CD14-positive monocyte (primary cell): ENCODE measurements at regions of chr19 and their contacts with region 1.

Region 1: DNA sequence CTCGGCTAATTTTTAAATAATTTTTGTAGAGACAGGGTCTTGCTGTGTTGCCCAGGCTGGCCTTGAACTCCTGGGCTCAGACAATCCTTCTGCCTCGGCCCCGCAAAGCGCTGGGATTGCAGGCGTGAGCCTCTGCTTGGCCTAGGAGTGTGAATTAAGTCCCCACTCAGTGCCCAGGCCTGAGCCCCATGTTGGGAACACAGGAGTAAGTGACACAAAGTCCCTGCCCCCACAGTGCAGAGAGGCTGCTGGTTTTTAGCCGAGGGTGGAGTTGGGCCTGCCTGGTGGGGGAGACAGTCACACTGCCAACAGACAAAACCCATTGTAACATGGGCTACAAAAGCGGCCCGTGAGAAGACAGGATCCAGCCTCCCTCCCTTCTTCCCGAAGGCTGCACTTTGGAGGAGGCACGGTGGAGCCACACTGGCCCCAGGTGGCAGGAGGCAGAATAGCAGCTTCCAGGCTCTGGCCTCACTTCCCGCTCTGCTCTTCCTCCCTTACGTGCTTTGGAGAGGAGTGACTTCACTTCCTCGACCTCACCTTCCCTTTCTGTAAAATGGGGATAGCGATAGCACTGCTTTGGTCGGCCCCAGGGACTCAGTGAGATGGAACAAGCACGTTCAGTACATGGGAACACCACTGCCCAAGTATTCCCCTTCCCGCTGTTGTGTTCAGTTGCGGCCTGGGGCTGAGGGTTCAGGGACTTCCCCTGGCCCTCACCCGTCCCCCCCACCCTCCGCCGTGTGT is 15.2 kb upstream of the EHD2 start:
- DNase-seq: peak; percentile 61 to 66 (median 63)
- H3K4me3 ChIP-seq: no peak overlapping the region
- H3K4me3 Mint-ChIP-seq: no peak overlapping the region
- H3K27ac ChIP-seq: peak overlapping the region in 1 of 2 donors; percentile 14
- H3K27ac Mint-ChIP-seq: peak overlapping the region in 2 of 7 donors; percentile 64 to 78
- H3K4me1 ChIP-seq: peaks cover 0 to 3% of the 10 kb centered on the region in 2 donors
- H3K4me1 Mint-ChIP-seq: peaks cover 5% of the 10 kb centered on the region
- H3K27me3 ChIP-seq: no peaks in the 10 kb centered on the region
- H3K27me3 Mint-ChIP-seq: no peaks in the 10 kb centered on the region
- CTCF ChIP-seq: peak; percentile 92

Region 2: GRCh38 chr19:47284324-47284899 is 413.6 kb before region 1 on chr19:
- intact Hi-C with region 1: loop called (anchors 5 to 10 kb)
- DNase-seq: peak; percentile 47 to 59 (median 52)
- H3K4me3 ChIP-seq: no peak overlapping the region
- H3K4me3 Mint-ChIP-seq: no peak overlapping the region
- H3K27ac ChIP-seq: no peak overlapping the region
- H3K27ac Mint-ChIP-seq: peak overlapping the region in 1 of 7 donors; percentile 70
- H3K4me1 ChIP-seq: no peaks in the 10 kb centered on the region
- H3K4me1 Mint-ChIP-seq: peaks cover 7% of the 10 kb centered on the region
- H3K27me3 ChIP-seq: no peaks in the 10 kb centered on the region
- H3K27me3 Mint-ChIP-seq: peaks cover 0 to 3% (median 2%) of the 10 kb centered on the region in 3 donors
- CTCF ChIP-seq: peak; percentile 68

Region 3: DNA sequence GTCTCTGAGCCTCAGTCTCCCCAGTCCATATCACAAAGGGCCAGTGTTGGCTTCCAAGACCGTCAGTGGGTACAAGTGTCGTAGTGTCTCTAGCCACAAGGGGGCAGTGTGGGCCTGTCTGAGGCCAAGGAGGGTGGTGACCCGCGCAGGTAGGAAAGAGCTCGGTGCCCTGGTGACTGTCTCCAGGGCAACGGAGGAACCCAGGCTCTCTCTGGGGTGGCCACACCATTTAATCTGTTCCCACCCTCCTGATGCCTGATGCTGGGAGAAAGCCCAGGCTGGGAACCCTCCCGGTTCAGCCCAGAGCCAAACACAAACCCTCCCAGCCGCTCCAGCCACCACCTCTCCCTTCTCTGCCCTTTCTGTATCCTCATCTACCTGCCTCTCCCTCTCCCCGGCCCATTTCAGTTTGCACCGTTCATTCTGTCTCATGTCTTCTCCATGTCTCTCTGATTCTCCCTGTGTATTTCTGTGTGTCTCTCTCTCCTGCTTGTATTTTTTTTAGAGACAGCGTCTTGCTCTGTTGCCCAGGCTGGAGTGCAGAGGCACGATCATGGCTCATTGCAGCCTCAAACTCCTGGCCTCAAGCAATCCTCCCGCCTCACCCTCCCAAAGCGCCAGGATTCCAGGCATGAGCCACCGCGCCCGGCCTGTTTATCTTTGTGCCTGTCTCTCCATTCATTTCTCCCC is 261.2 kb before region 1 on chr19:
- intact Hi-C with region 1: loop called (anchors 2 kb)
- DNase-seq: peak; percentile 59 to 71 (median 62)
- H3K4me3 ChIP-seq: no peak overlapping the region
- H3K4me3 Mint-ChIP-seq: peak overlapping the region in 1 of 2 donors; percentile 33
- H3K27ac ChIP-seq: no peak overlapping the region
- H3K27ac Mint-ChIP-seq: no peak overlapping the region
- H3K4me1 ChIP-seq: no peaks in the 10 kb centered on the region
- H3K4me1 Mint-ChIP-seq: peaks cover 2% of the 10 kb centered on the region
- H3K27me3 ChIP-seq: peaks cover 0 to 6% of the 10 kb centered on the region in 2 donors
- H3K27me3 Mint-ChIP-seq: peaks cover 12 to 39% (median 23%) of the 10 kb centered on the region in 3 donors
- CTCF ChIP-seq: peak; percentile 91

Region 4: GRCh38 chr19:47886010-47886559 is 188.0 kb after region 1 on chr19 and contains the start of gene SULT2A1:
- intact Hi-C with region 1: no loop called
- DNase-seq: no peak
- H3K4me3 ChIP-seq: no peak within 1 kb of the TSS
- H3K4me3 Mint-ChIP-seq: peak within 1 kb of the TSS in 1 of 2 donors; percentile 1
- H3K27ac ChIP-seq: no peak within 1 kb of the TSS
- H3K27ac Mint-ChIP-seq: peak within 1 kb of the TSS in 1 of 7 donors; percentile 43
- H3K4me1 ChIP-seq: no peaks in the 10 kb centered on the region
- H3K4me1 Mint-ChIP-seq: no peaks in the 10 kb centered on the region
- H3K27me3 ChIP-seq: peaks cover 0 to 3% of the 10 kb centered on the region in 2 donors
- H3K27me3 Mint-ChIP-seq: peaks cover 4 to 13% (median 6%) of the 10 kb centered on the region in 3 donors
- CTCF ChIP-seq: no peak
- polyA plus RNA-seq, gene SULT2A1: not detected